ENCODE measurements at regions of chr18 and their contacts with region 1.

Region 1: GRCh38 chr18:36015629-36016028 is 43.1 kb downstream of the RMP24 start:
- DNase-seq: no peak
- H3K4me3 Mint-ChIP-seq: no peak overlapping the region
- H3K27ac Mint-ChIP-seq: no peak overlapping the region
- H3K4me1 Mint-ChIP-seq: no peaks in the 10 kb centered on the region
- H3K27me3 Mint-ChIP-seq: no peaks in the 10 kb centered on the region

Region 2: GRCh38 chr18:36067055-36067957 is 51.7 kb after region 1 on chr18 and contains the start of gene RPRD1A:
- CTCF ChIA-PET with region 1: interaction called, 18 read pairs
- POLR2A ChIA-PET with region 1: interaction called, 4 read pairs
- intact Hi-C with region 1: no loop called
- DNase-seq: peak; percentile 98
- H3K4me3 Mint-ChIP-seq: peak within 1 kb of the TSS; percentile 92
- H3K27ac Mint-ChIP-seq: peak within 1 kb of the TSS; percentile 94
- H3K4me1 Mint-ChIP-seq: peaks cover 36% of the 10 kb centered on the region
- H3K27me3 Mint-ChIP-seq: no peaks in the 10 kb centered on the region
- total RNA-seq, gene RPRD1A: 25.9 to 29.6 TPM

Region 3: DNA sequence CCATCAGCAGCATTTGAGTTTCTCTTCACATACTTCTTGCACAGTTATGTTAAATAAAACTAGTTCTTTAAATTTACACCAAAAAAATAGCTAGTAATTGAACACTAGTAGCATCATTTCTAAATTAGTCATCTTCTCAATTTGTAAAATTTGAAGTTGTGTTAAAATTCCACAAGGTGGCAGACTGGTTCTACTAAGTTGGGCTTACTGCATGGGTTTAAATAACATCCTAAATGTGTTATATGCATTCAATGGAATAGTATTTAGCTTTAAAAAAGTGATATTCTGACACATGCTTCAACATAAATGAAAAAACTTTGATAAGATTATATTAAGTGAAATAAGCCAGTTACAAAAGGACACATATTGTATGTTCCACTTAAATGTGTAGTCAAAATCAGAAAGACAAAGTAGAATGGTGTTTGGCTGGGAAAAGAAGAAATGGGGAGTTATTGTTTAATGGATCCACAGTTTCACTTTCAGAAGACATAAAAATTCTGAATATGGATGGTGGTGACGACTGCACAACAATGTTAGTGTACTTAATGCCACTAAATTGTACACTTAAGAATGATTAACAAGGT is 80.4 kb after region 1 on chr18:
- CTCF ChIA-PET with region 1: interaction called, 36 read pairs
- POLR2A ChIA-PET with region 1: interaction called, 4 read pairs
- intact Hi-C with region 1: loop called (anchors 1 kb)
- DNase-seq: no peak
- H3K4me3 Mint-ChIP-seq: no peak overlapping the region
- H3K27ac Mint-ChIP-seq: no peak overlapping the region
- H3K4me1 Mint-ChIP-seq: peaks cover 12% of the 10 kb centered on the region
- H3K27me3 Mint-ChIP-seq: peaks cover 2% of the 10 kb centered on the region

Region 4: DNA sequence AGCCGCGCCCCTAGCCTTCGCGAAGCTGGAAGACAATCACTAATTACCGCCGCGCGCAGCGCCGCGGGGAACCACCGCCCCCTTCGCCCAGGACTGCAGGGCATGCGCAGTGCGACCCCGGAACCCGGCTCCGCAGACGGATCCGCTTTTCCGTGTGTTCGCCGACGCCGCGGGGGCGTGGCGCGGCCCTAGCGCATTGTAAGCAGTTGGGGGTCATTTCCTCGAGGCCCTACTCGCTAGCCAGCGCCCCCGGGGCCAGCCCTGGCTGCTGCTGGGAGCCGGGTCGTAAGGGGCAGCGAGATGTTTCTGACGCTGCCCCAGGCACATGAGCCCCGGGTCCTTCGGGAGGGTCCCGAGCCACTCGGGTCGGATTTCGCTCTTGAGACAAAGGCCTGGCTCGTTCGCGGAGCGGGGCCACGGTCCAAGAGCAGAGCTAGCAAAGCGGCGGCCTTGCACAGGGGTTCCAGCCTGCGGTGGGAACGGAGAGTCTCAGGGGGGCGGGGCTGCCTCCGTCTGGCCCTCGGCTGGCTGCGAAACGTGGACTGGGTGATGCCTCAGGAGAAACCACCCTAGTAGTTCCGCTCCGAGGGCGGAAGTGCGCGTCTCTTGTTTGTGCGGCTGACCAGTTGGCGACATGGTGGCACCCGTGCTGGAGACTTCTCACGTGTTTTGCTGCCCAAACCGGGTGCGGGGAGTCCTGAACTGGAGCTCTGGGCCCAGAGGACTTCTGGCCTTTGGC is 113.8 kb after region 1 on chr18 and contains the starts of genes ELP2 and SLC39A6:
- CTCF ChIA-PET with region 1: interaction called, 12 read pairs
- POLR2A ChIA-PET with region 1: no interaction called
- intact Hi-C with region 1: no loop called
- DNase-seq: peak; percentile 95
- H3K4me3 Mint-ChIP-seq: peak within 1 kb of the TSS; percentile 94
- H3K27ac Mint-ChIP-seq: peak within 1 kb of the TSS; percentile 95
- H3K4me1 Mint-ChIP-seq: peaks cover 60% of the 10 kb centered on the region
- H3K27me3 Mint-ChIP-seq: no peaks in the 10 kb centered on the region
- total RNA-seq, gene ELP2: 83.7 to 84.4 TPM
- total RNA-seq, gene SLC39A6: 23.7 to 24.3 TPM

Region 5: DNA sequence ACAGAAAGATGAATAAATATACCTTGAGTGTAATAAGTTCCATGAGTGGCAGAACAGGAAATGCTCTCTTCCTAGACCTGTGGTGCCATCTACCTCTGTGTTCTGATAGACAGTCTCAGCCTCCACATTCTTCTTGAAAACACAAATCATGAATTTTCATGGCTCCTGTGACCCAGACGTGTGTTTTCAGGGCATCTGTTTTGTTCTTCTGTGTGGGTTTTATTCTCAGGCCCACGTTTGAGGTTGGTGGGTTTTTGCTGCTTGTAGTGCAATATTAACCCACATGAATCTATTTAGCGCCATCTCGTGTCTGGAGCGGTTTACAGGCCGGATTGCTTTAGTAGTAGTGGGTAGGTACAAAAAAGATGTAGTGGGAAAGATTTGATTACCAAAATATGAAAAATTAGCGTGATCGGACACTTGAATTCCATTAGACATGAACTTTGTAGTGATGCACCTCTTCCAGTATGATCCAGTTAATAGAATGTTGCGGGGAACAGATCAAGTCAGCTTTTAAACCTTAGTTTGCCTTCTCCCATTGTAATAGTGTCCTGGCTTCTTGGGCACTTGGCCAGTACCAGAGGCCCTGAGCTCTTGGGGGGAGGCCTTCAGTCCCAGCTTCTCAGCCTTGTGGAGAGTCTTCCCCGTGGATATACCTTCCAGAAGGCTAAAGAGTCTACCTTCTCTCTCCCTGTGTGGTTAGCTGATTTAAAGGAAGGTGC is 556.7 kb after region 1 on chr18:
- CTCF ChIA-PET with region 1: interaction called, 4 read pairs
- POLR2A ChIA-PET with region 1: no interaction called
- intact Hi-C with region 1: loop called (anchors 1 kb)
- DNase-seq: peak; percentile 28
- H3K4me3 Mint-ChIP-seq: no peak overlapping the region
- H3K27ac Mint-ChIP-seq: no peak overlapping the region
- H3K4me1 Mint-ChIP-seq: no peaks in the 10 kb centered on the region
- H3K27me3 Mint-ChIP-seq: peaks cover 1% of the 10 kb centered on the region

Measured in activated CD4-positive, alpha-beta memory T cell treated with anti-CD3 and anti-CD28 coated beads for 36 hours (primary cell).